ENCODE measurements at regions of chr18 and their contacts with region 1.

Region 1: DNA sequence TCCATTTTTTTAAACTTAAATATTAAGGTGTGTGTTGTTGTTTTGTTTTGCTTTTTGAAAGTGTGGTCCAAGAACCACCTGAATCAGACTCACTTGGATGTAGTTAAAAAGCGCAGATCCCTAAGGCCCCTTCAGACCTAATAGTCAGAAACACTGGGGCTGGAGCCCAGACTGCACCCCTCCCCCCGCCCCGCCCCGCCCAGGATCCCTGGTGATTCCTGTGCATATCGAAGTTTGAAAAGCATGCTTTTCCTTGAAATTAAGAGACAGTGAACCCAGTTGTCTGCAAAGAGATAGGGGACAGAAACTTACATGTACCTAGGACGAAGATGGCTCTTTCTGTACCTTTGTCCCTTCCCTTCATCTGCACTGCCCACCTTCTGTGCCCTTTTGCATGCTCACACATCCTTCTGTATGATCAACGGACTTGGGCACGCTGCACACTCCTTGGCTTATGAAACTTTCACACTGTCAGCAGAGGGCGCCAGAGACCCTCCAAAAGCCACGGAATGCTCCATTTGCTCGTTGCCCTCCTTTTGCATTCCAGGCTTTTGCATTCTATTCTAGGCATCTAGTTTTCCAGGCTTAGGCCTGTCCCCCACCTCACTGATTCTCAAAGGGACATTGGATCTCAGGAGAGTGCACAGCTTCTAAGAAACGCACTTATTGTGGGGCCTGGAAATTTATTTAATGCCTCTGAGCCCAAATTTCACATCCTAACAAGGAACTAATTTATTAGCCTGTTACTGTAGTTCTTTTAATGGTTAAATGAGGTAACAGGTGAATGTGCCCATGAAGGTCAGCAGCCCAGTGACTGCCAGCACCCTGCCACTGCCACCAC is 32.8 kb upstream of the SLC14A1 start:
- DNase-seq: peak; percentile 73 to 83 (median 80)
- ATAC-seq: peak; percentile 86
- H3K4me3 ChIP-seq: no peak overlapping the region
- H3K27ac ChIP-seq: no peak overlapping the region
- H3K4me1 ChIP-seq: no peaks in the 10 kb centered on the region
- H3K27me3 ChIP-seq: no peaks in the 10 kb centered on the region
- CTCF ChIP-seq: peak; percentile 51 to 85 (median 79)
- POLR2A ChIP-seq: no peak

Region 2: DNA sequence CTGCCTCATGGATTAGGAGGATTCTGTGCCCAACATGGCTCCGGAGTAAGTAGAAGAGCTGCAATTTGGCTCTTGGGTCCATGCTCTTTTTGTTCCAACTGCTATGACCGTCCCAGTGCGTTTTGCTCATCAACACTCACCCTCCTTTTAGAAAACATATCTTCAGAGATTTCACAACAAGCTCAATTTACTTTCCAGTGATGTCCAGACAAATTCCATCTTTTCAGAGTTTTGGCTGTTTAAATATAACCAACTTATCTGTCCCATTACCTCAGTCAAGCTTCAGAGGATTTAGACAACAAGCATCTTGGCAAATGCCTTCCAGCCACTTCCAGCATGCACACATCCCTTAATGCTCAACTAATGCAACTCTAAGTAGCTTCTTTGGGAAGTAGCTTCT is 82.8 kb before region 1 on chr18:
- intact Hi-C with region 1: no loop called
- DNase-seq: no peak
- ATAC-seq: no peak
- H3K4me3 ChIP-seq: no peak overlapping the region
- H3K27ac ChIP-seq: no peak overlapping the region
- H3K4me1 ChIP-seq: peaks cover 11% of the 10 kb centered on the region
- H3K27me3 ChIP-seq: no peaks in the 10 kb centered on the region
- CTCF ChIP-seq: no peak
- POLR2A ChIP-seq: no peak

Region 3: DNA sequence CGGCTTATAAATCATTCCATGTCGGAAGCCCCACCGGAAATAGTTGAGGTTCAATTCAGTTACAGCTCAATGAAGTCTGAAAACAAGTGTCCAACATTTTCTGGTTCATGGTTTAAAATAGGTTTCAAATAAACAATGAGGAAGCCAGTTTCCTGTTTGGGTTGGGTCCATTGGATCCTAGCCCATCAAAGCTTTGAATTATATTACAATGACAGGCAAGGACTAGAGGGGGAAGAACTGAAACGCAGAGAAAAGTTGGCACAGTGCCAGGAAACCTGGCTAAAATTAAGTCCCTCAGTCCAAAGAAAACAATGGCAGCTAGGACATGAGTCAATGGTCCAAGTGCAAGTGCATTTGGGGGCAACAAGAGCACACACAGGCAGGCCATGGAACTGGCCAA is 64.7 kb after region 1 on chr18:
- intact Hi-C with region 1: no loop called
- DNase-seq: peak; percentile 23 to 45 (median 34)
- ATAC-seq: peak; percentile 55
- H3K4me3 ChIP-seq: no peak overlapping the region
- H3K27ac ChIP-seq: no peak overlapping the region
- H3K4me1 ChIP-seq: peaks cover 12% of the 10 kb centered on the region
- H3K27me3 ChIP-seq: no peaks in the 10 kb centered on the region
- CTCF ChIP-seq: no peak
- POLR2A ChIP-seq: no peak

Region 4: DNA sequence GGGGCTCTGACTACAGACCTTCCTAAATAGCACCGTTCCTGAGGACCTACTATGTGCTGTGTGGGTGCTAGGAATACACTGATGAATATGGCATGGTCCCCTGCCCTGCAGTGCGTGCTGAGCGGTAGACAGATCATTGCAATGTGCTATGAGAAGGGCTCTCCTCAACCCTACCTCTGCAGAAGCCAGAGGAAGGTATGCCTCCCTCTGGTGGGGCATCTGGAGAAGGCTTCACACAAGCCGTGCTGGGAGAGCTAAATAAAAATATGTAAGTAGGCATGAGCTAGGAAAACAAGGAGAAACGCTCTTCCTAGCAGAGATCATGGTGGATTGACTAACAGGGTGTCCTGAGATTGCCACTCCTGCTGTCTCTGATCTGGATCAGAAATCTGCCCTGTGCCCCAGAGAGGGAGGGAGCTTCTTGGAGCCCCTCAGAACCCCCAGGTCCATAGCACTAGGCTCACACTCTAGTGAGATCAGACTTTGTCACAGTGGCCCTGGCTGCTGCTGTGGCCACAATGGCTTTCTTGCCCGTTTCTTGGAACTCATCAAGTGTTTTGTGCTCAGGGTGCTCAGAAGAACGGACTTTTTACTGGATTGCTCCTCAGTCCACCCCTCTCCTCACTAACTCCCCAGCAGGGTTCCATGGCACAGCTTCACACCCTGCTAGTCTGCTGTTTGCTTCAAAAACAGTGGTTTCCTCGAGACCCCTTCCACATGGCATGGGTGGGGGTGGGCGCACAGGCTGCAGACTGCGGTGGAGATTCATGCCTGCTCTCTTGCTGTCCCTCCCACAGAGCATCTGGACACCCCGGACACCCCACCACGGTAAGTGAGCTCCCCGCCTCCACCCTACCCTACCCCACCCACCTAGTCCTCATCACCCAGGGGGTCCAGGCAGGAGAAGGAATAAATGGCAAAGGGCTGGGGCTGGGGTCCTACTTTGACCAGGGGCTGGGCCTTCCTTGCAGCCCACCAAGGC is 148.5 kb after region 1 on chr18:
- intact Hi-C with region 1: loop called (anchors 10 kb)
- DNase-seq: peak; percentile 43 to 48 (median 46)
- ATAC-seq: peak; percentile 60
- H3K4me3 ChIP-seq: no peak overlapping the region
- H3K27ac ChIP-seq: no peak overlapping the region
- H3K4me1 ChIP-seq: peaks cover 23% of the 10 kb centered on the region
- H3K27me3 ChIP-seq: peaks cover 0 to 6% of the 10 kb centered on the region in 2 donors
- CTCF ChIP-seq: peak; percentile 17 to 57 (median 47)
- POLR2A ChIP-seq: no peak

Region 5: GRCh38 chr18:45879681-45880655 is 188.8 kb after region 1 on chr18:
- intact Hi-C with region 1: loop called (anchors 10 kb)
- DNase-seq: peak; percentile 63 to 76 (median 64)
- ATAC-seq: peak; percentile 85
- H3K4me3 ChIP-seq: no peak overlapping the region
- H3K27ac ChIP-seq: no peak overlapping the region
- H3K4me1 ChIP-seq: peaks cover 8% of the 10 kb centered on the region
- H3K27me3 ChIP-seq: no peaks in the 10 kb centered on the region
- CTCF ChIP-seq: peak; percentile 81 to 99 (median 91)
- POLR2A ChIP-seq: no peak

Region 6: DNA sequence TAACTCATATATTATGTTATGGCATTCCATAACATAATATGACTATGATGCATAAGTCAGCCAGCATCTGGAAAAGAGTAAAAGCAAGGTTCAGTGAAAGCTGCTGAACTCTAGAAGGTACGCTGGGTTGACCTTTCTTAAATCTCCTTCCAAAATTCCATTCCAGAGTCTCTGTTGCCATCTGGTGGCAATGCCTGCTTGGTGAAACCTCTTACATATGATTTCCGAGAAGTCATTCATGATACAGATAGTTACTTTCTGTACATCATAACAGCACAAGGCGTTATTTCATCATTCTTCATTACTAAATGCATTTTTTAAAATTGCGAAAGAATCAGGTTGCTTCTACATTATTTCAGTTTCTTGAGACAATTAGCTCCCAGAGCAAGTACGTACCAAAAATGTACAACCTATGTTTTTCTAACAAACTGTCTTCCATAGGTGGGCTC is 282.9 kb after region 1 on chr18:
- intact Hi-C with region 1: loop called (anchors 10 kb)
- DNase-seq: peak; percentile 64 to 78 (median 69)
- ATAC-seq: peak; percentile 66
- H3K4me3 ChIP-seq: no peak overlapping the region
- H3K27ac ChIP-seq: no peak overlapping the region
- H3K4me1 ChIP-seq: peaks cover 22% of the 10 kb centered on the region
- H3K27me3 ChIP-seq: no peaks in the 10 kb centered on the region
- CTCF ChIP-seq: peak; percentile 40 to 81 (median 76)
- POLR2A ChIP-seq: no peak

Region 7: GRCh38 chr18:46641917-46642316 is 950.7 kb after region 1 on chr18:
- intact Hi-C with region 1: no loop called
- DNase-seq: no peak
- ATAC-seq: no peak
- H3K4me3 ChIP-seq: no peak overlapping the region
- H3K27ac ChIP-seq: no peak overlapping the region
- H3K4me1 ChIP-seq: no peaks in the 10 kb centered on the region
- H3K27me3 ChIP-seq: no peaks in the 10 kb centered on the region
- CTCF ChIP-seq: no peak
- POLR2A ChIP-seq: no peak